SK-N-SH (cell line): ENCODE measurements at regions of chr11 and their contacts with region 1.

Region 1: DNA sequence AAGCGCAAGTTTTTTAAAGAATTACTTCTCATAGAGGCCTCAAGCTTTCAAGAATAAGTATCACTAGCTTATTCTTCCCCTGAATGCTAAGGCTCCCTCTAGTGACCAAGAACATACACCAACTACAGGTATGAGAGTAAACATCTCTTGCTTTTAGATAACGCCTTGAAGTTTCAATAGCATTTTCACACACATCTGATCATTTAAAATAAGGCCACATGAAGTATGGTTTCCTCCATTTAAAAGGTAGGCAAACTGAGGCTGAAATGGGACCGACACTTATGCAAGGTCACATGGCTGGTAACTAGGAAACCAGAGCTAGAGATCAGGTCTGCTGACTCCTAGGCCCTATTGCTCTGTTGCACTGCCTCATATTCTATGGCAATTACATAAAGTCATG is 66.5 kb downstream of the CCDC34 start:
- DNase-seq: peak; percentile 36
- H3K4me3 ChIP-seq: no peak overlapping the region; a peak in 1 of 4 replicates
- H3K27ac ChIP-seq: no peak overlapping the region
- H3K4me1 ChIP-seq: peaks cover 0 to 39% of the 10 kb centered on the region in 2 experiments; a peak in 1 of 4 replicates
- H3K27me3 ChIP-seq: no peaks in the 10 kb centered on the region
- CTCF ChIP-seq: peak; percentile 76
- EP300 ChIP-seq: no peak
- RAD21 ChIP-seq: peak; percentile 77

Region 2: DNA sequence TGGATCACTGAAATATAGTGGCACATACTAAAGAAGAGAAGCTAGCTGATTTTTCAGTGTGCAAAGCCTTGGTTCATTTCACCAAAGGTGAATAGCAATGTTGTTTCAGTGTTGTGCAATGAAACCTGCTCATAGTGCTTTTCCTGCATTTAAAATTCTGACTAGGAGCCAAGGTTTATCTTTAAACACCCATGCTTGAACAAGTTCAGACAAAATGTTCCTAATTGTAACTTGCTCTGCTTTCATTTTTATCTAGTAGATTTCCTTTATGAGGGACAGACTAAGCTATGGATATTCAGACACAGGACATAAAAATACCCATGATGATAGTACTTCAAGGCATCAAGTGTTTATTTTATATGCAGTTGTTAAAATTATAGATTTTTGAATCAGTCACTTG is 208.1 kb before region 1 on chr11:
- CTCF ChIA-PET with region 1: no interaction called
- POLR2A ChIA-PET with region 1: no interaction called
- DNase-seq: no peak
- H3K4me3 ChIP-seq: no peak overlapping the region
- H3K27ac ChIP-seq: no peak overlapping the region
- H3K4me1 ChIP-seq: no peaks in the 10 kb centered on the region; a peak in 1 of 4 replicates
- H3K27me3 ChIP-seq: no peaks in the 10 kb centered on the region
- CTCF ChIP-seq: no peak
- EP300 ChIP-seq: no peak
- RAD21 ChIP-seq: no peak

Region 3: DNA sequence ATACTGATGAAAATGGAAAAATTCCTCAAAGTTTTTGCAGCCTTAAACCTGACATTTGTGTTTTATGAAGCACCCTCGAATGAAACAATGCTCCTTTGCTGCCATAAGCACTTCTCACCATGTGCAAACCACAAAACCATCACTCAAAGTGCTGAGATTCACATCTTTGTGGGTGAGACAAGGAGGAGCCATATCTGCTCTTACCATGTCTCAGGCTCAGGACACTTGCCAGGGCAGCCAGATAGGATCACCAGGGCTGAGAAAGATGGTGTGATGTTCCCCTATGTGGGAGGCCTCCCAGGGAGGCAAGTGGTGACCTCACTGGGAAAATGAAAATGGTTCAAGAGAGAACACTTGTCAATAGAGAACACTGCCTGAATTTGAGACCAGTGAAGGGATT is 53.9 kb before region 1 on chr11:
- CTCF ChIA-PET with region 1: no interaction called
- POLR2A ChIA-PET with region 1: no interaction called
- DNase-seq: no peak
- H3K4me3 ChIP-seq: no peak overlapping the region
- H3K27ac ChIP-seq: peak overlapping the region in 1 of 2 experiments; percentile 89; a peak in 2 of 4 replicates
- H3K4me1 ChIP-seq: peaks cover 0 to 22% of the 10 kb centered on the region in 2 experiments; a peak in 2 of 4 replicates
- H3K27me3 ChIP-seq: no peaks in the 10 kb centered on the region
- CTCF ChIP-seq: no peak
- EP300 ChIP-seq: peak in 1 of 2 experiments; percentile 93; a peak in 2 of 4 replicates
- RAD21 ChIP-seq: no peak

Region 4: DNA sequence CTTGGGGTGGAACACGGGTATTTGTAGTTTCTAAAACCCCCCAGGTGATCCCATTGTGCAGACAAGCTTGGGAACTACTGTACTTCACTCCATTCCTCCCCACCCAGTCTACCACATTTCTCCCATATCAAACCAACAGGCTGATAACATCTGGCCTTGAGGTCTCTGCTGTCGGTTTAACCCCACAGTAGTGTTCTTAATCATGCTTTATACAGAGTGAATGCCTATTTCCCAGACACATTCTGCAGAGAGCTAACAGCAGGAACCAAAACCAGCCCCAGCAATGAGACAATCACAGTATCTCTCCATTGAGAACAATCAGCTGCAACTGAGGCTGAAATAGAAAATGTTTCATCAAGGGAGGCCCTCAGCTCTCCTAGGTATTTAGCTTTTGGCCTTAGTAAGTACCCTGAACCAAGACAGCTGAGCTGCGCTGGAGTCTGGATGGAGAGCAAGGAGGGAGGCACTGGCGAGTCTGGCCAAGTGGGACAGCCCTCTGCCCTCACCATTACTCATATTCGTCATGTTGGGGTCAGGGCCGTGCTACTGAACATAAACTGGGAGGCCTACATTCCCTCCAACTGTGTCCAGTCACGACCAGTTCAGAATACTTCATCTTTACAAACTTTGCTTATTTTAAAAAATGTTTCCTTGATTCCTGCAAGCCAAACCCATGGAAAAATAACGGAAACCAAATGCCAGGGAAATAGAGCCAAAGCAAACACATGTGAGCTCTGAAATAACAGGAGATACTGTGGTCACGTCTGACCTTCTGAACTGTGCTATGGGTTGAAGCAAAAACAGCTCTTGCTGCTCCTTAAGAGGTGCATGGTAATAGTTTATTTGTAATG is 14.5 kb before region 1 on chr11:
- CTCF ChIA-PET with region 1: interaction called, 18 read pairs
- POLR2A ChIA-PET with region 1: no interaction called
- DNase-seq: no peak
- H3K4me3 ChIP-seq: no peak overlapping the region
- H3K27ac ChIP-seq: peak overlapping the region; percentile 67 to 69
- H3K4me1 ChIP-seq: peaks cover 11 to 12% of the 10 kb centered on the region in 2 experiments; a peak in 3 of 4 replicates
- H3K27me3 ChIP-seq: no peaks in the 10 kb centered on the region
- CTCF ChIP-seq: no peak
- EP300 ChIP-seq: peak in 1 of 2 experiments; percentile 37; a peak in 1 of 4 replicates
- RAD21 ChIP-seq: no peak

Region 5: GRCh38 chr11:27309046-27309445 is 12.5 kb after region 1 on chr11:
- CTCF ChIA-PET with region 1: interaction called, 27 read pairs
- POLR2A ChIA-PET with region 1: no interaction called
- DNase-seq: no peak
- H3K4me3 ChIP-seq: no peak overlapping the region
- H3K27ac ChIP-seq: no peak overlapping the region
- H3K4me1 ChIP-seq: peaks cover 12 to 13% of the 10 kb centered on the region in 2 experiments
- H3K27me3 ChIP-seq: no peaks in the 10 kb centered on the region
- CTCF ChIP-seq: no peak
- EP300 ChIP-seq: no peak
- RAD21 ChIP-seq: no peak

Region 6: GRCh38 chr11:27362749-27363575 is 66.5 kb after region 1 on chr11 and contains the start of gene CCDC34:
- CTCF ChIA-PET with region 1: no interaction called
- POLR2A ChIA-PET with region 1: no interaction called
- DNase-seq: peak; percentile 96
- H3K4me3 ChIP-seq: peak within 1 kb of the TSS; percentile 82 to 94
- H3K27ac ChIP-seq: peak within 1 kb of the TSS; percentile 43 to 71; a peak in 3 of 4 replicates
- H3K4me1 ChIP-seq: peaks cover 10 to 15% of the 10 kb centered on the region in 2 experiments; a peak in 3 of 4 replicates
- H3K27me3 ChIP-seq: no peaks in the 10 kb centered on the region
- CTCF ChIP-seq: no peak
- EP300 ChIP-seq: no peak
- RAD21 ChIP-seq: 0 out of 2 replicates have a peak, but pooled peaks have one; percentile 6
- polyA plus RNA-seq, gene CCDC34: 5.7 and 6.7 TPM in 2 replicates